Endothelial cell of umbilical vein (primary cell): ENCODE measurements at regions of chr17 and their contacts with region 1.

Region 1: DNA sequence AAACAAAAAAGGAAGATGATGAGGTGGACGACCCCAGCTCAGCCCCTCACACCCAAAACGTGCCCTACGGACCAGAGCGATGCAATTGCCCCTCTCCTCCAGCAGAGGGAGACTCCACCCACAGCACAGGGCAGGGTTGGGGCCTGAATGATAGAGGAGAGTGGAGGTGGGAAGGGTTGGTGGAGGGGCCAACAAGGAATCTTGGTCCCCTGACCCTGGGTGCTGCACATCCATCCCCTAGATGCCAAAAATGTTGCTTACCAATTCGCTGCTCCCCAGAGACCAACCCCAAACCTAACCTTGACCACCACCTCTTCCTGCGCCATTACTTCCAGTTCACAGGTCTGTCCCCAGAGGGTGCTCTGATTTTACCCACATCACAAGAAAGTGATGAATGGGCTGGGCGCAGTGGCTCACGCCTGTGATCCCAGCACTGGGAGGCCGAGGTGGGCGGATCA is 12.9 kb downstream of the P2RX5 start:
- DNase-seq: peak; percentile 31
- H3K4me3 ChIP-seq: no peak overlapping the region
- H3K27ac ChIP-seq: no peak overlapping the region
- H3K4me1 ChIP-seq: no peaks in the 10 kb centered on the region
- H3K27me3 ChIP-seq: peaks cover 0 to 7% of the 10 kb centered on the region in 2 experiments
- CTCF ChIP-seq: peak; percentile 93 to 96
- POLR2A ChIP-seq: no peak

Region 2: DNA sequence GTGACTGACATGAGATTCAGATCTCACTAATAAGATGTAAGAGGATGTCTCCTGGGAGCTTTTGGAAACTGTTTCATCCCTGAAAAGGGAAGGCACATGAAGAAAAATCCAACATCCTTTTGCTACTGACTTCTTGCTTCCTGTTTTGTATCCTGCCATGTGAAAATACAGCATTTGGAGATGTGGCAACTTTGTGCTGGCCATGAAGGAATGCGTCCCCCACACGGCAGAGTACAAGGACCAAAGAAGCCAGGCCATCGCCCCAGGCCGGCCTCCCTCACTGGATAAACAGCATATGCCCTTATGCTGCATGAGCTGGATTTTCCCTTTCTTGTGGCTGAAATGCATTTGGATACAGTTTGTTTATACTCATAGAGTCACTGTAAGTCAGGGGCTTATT is 35.1 kb after region 1 on chr17:
- CTCF ChIA-PET with region 1: interaction called, 18 read pairs
- POLR2A ChIA-PET with region 1: no interaction called
- dilution Hi-C with region 1: no loop called
- intact Hi-C with region 1: loop called (anchors 2 kb)
- DNase-seq: peak; percentile 15
- H3K4me3 ChIP-seq: no peak overlapping the region
- H3K27ac ChIP-seq: no peak overlapping the region
- H3K4me1 ChIP-seq: peaks cover 19% of the 10 kb centered on the region
- H3K27me3 ChIP-seq: no peaks in the 10 kb centered on the region
- CTCF ChIP-seq: no peak
- POLR2A ChIP-seq: no peak

Region 3: DNA sequence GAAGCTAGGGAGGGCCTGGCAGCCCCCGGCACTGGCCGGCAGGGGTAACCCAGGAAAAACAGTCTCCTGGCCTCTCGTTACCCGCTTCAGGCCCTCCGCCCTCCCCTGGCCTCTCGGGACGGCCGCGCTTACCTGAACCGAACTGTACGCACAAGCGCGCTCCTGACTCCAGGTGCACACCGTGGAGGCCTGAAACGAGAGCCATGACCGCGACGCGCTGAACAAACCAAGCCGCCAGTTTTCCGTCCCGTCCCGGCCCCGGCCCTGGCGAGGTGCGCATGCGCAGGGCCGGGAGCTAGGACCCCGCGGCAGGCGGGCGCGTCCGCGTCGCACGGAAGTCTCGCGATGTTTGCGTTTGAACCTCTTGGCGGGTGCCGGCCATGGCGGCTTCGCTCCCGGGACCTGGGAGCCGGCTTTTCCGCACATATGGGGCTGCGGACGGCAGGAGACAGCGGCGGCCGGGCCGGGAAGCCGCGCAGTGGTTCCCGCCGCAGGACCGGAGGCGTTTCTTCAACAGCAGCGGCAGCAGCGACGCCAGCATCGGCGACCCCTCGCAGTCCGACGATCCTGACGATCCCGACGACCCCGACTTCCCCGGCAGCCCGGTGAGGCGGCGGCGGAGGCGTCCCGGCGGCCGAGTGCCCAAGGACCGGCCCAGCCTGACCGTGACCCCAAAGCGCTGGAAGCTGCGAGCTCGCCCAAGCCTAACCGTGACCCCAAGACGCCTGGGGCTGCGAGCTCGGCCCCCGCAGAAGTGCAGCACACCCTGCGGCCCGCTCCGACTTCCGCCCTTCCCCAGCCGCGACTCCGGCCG is 40.7 kb after region 1 on chr17 and contains the start of gene HASPIN:
- CTCF ChIA-PET with region 1: interaction called, 18 read pairs
- POLR2A ChIA-PET with region 1: no interaction called
- dilution Hi-C with region 1: no loop called
- intact Hi-C with region 1: loop called (anchors 2 kb)
- DNase-seq: peak; percentile 89
- H3K4me3 ChIP-seq: peak within 1 kb of the TSS; percentile 70 to 91 (median 89)
- H3K27ac ChIP-seq: peak within 1 kb of the TSS; percentile 54
- H3K4me1 ChIP-seq: peaks cover 28% of the 10 kb centered on the region
- H3K27me3 ChIP-seq: no peaks in the 10 kb centered on the region
- CTCF ChIP-seq: peak; percentile 9 to 56
- POLR2A ChIP-seq: peak; percentile 92
- total RNA-seq, gene HASPIN: 11.8 and 13.2 TPM in 2 replicates

Region 4: GRCh38 chr17:3827124-3827773 is 144.2 kb after region 1 on chr17:
- CTCF ChIA-PET with region 1: interaction called, 14 read pairs
- POLR2A ChIA-PET with region 1: no interaction called
- dilution Hi-C with region 1: no loop called
- intact Hi-C with region 1: loop called (anchors 2 kb)
- DNase-seq: peak; percentile 79
- H3K4me3 ChIP-seq: no peak overlapping the region
- H3K27ac ChIP-seq: no peak overlapping the region
- H3K4me1 ChIP-seq: no peaks in the 10 kb centered on the region
- H3K27me3 ChIP-seq: no peaks in the 10 kb centered on the region
- CTCF ChIP-seq: peak; percentile 64 to 71
- POLR2A ChIP-seq: no peak